PC-9 (cell line): ENCODE measurements at regions of chr12 and their contacts with region 1.

Region 1: DNA sequence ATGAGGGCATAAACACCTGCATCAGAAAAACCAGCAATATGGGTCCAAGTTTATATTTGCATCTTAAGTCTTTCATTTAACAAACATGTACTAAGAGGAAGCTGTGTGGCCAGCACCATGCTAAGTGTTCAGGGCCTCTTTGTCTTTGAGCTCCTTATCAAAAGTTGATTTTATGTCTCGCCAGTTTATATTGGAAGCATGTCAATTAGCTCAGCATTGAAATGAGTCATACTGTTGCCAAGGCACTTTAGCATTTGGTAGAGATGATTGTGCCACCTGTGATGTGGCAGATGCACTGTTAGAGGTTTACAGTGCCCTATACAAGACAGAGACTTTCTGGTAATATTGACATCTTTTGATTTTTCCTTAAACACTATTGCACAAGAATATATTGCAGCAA is 68.5 kb downstream of the BHLHE41 start:
- DNase-seq: peak; percentile 13 to 64
- H3K4me3 ChIP-seq: no peak overlapping the region
- H3K27ac ChIP-seq: no peak overlapping the region
- H3K4me1 ChIP-seq: peaks cover 6% of the 10 kb centered on the region; the same call in 1 of the 2 replicates
- H3K27me3 ChIP-seq: no peaks in the 10 kb centered on the region
- CTCF ChIP-seq: no peak

Region 2: GRCh38 chr12:25992026-25992782 is 64.1 kb before region 1 on chr12:
- CTCF ChIA-PET with region 1: no interaction called
- POLR2A ChIA-PET with region 1: interaction called, 19 read pairs
- intact Hi-C with region 1: no loop called
- DNase-seq: peak in 1 of 2 experiments; percentile 19
- H3K4me3 ChIP-seq: no peak overlapping the region
- H3K27ac ChIP-seq: no peak overlapping the region
- H3K4me1 ChIP-seq: 0 out of 2 replicates have a peak, but pooled peaks cover 4% of the 10 kb centered on the region
- H3K27me3 ChIP-seq: no peaks in the 10 kb centered on the region
- CTCF ChIP-seq: no peak

Region 3: GRCh38 chr12:26434299-26435068 is 378.1 kb after region 1 on chr12:
- CTCF ChIA-PET with region 1: no interaction called
- POLR2A ChIA-PET with region 1: no interaction called
- intact Hi-C with region 1: no loop called
- DNase-seq: peak; percentile 40 to 55
- H3K4me3 ChIP-seq: no peak overlapping the region
- H3K27ac ChIP-seq: no peak overlapping the region
- H3K4me1 ChIP-seq: peaks cover 5% of the 10 kb centered on the region; the same call in 1 of the 2 replicates
- H3K27me3 ChIP-seq: no peaks in the 10 kb centered on the region
- CTCF ChIP-seq: peak; percentile 69